AG04449 (cell line): ENCODE measurements at regions of chr6 and their contacts with region 1.

Region 1: GRCh38 chr6:79789843-79790242 is 157.5 kb downstream of the ELOVL4 start:
- DNase-seq: no peak
- H3K4me3 ChIP-seq: no peak overlapping the region
- CTCF ChIP-seq: no peak

Region 2: GRCh38 chr6:79777713-79778579 is 11.9 kb before region 1 on chr6:
- CTCF ChIA-PET with region 1: interaction called, 15 read pairs
- POLR2A ChIA-PET with region 1: no interaction called
- DNase-seq: no peak
- H3K4me3 ChIP-seq: peak overlapping the region; percentile 39
- CTCF ChIP-seq: peak; percentile 99

Region 3: GRCh38 chr6:79802657-79803300 is 12.9 kb after region 1 on chr6:
- CTCF ChIA-PET with region 1: no interaction called
- POLR2A ChIA-PET with region 1: no interaction called
- DNase-seq: no peak
- H3K4me3 ChIP-seq: no peak overlapping the region
- CTCF ChIP-seq: no peak